ENCODE measurements at regions of chr4 and their contacts with region 1.

Region 1: GRCh38 chr4:87078987-87079486 is 141.4 kb downstream of the KLHL8 start:
- DNase-seq: no peak
- H3K4me3 ChIP-seq: no peak overlapping the region
- H3K27ac ChIP-seq: no peak overlapping the region
- H3K4me1 ChIP-seq: peaks cover 0 to 7% (median 1%) of the 10 kb centered on the region in 4 experiments; a peak in 2 of 7 replicates
- H3K27me3 ChIP-seq: no peaks in the 10 kb centered on the region
- CTCF ChIP-seq: no peak
- EP300 ChIP-seq: no peak
- POLR2A ChIP-seq: no peak
- RAD21 ChIP-seq: no peak

Region 2: DNA sequence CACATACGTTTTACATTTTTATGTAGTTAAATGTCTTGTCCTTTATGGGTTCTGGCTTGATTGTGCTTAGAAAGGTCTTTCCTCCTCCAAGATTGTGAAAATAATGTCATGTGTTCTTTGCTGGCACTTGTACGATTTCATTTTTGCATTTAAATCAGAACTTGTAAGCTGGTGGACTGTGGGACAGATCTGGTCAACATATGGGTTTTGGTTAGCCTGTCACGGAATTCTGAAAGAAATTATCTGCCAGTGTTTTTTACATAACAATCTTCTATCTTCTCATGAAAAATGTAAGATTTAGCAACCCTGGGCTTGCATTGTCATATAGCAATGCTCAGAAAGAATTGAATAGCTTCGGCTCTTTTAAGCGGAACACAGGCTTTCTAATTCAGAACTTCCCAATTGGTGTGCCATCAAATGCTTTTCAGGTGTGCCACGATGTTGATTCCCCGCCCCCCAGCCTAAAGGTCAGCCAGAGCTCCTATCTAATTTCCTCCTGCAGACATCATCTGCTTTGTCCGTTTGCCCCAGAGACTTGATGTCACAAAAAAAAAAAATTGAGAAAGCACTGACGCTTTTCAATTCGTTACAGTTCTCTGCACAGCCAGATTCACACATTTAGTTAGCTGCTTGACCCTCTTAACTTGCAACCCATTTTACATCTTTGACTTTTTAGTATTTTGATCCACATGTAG is 128.1 kb before region 1 on chr4:
- CTCF ChIA-PET with region 1: no interaction called
- POLR2A ChIA-PET with region 1: no interaction called
- DNase-seq: peak in 1 of 2 experiments; percentile 64
- H3K4me3 ChIP-seq: peak overlapping the region in 2 of 4 experiments; percentile 8 to 32; a peak in 2 of 8 replicates
- H3K27ac ChIP-seq: peak overlapping the region; percentile 21; the same call in 1 of the 2 replicates
- H3K4me1 ChIP-seq: peaks cover 2 to 44% (median 22%) of the 10 kb centered on the region in 4 experiments
- H3K27me3 ChIP-seq: no peaks in the 10 kb centered on the region
- CTCF ChIP-seq: no peak
- EP300 ChIP-seq: no peak
- POLR2A ChIP-seq: no peak
- RAD21 ChIP-seq: no peak

Region 3: DNA sequence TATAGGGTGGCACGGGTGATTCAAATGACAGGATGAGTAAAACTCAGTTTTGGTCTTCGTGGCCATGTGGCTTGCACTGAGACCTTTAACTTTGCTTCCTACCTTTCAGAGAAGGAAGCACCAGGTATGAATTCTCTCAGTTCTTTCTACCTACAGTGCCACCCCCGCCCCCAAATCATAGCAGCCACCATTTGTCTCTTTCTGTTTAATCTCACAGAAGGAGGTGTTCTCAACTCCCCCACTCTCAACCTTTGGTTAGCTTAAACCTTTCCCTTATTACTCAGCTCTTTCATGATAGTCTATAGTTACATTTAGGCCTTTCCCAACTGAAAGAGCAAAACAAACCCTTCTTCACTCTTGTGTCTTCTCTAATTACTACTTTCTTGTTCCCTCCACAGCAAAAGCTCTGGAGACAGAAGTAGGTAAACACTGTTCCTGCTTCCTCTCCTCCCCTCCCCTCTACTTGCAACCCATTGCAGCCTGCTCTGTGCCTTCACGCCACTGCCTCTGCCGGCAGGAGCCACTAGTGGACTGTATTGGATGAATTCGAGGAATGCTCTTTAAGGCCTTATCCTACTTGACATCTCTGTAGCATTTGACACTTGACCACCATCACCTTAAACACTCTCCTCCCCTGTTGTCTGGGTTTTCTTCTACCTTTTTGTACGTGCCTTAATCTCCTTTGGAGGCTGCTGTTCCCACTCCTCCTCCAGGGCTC is 20.5 kb before region 1 on chr4:
- CTCF ChIA-PET with region 1: no interaction called
- POLR2A ChIA-PET with region 1: no interaction called
- DNase-seq: no peak
- H3K4me3 ChIP-seq: no peak overlapping the region
- H3K27ac ChIP-seq: no peak overlapping the region
- H3K4me1 ChIP-seq: peaks cover 0 to 14% (median 6%) of the 10 kb centered on the region in 4 experiments; a peak in 3 of 7 replicates
- H3K27me3 ChIP-seq: no peaks in the 10 kb centered on the region
- CTCF ChIP-seq: peak; percentile 11 to 36 (median 26); a peak in 2 of 4 replicates
- EP300 ChIP-seq: no peak
- POLR2A ChIP-seq: no peak
- RAD21 ChIP-seq: peak; percentile 35 to 47; a peak in 3 of 4 replicates

Region 4: GRCh38 chr4:87093443-87094123 is 14.5 kb after region 1 on chr4:
- CTCF ChIA-PET with region 1: interaction called, 15 read pairs
- POLR2A ChIA-PET with region 1: interaction called, 3 read pairs
- DNase-seq: no peak
- H3K4me3 ChIP-seq: no peak overlapping the region
- H3K27ac ChIP-seq: no peak overlapping the region
- H3K4me1 ChIP-seq: peaks cover 0 to 9% (median under 1%) of the 10 kb centered on the region in 4 experiments; a peak in 3 of 7 replicates
- H3K27me3 ChIP-seq: no peaks in the 10 kb centered on the region
- CTCF ChIP-seq: peak in 2 of 3 experiments; percentile 56 to 68; a peak in 3 of 4 replicates
- EP300 ChIP-seq: no peak
- POLR2A ChIP-seq: no peak
- RAD21 ChIP-seq: peak; percentile 73 to 79

Measured in H1 (cell line).